ENCODE measurements at regions of chr1 and their contacts with region 1.

Region 1: GRCh38 chr1:211944733-211945500 is 90.4 kb downstream of the INTS7 start:
- DNase-seq: no peak
- ATAC-seq: peak; percentile 44; the same call in 2 of the 3 replicates
- H3K4me3 ChIP-seq: no peak overlapping the region
- H3K27ac ChIP-seq: no peak overlapping the region
- H3K4me1 ChIP-seq: no peaks in the 10 kb centered on the region
- H3K27me3 ChIP-seq: no peaks in the 10 kb centered on the region
- CTCF ChIP-seq: peak; percentile 35 to 53 (median 41); a peak in 4 of 6 replicates
- EP300 ChIP-seq: no peak
- POLR2A ChIP-seq: no peak
- RAD21 ChIP-seq: peak in 1 of 2 experiments; percentile 59; a peak in 3 of 4 replicates

Region 2: DNA sequence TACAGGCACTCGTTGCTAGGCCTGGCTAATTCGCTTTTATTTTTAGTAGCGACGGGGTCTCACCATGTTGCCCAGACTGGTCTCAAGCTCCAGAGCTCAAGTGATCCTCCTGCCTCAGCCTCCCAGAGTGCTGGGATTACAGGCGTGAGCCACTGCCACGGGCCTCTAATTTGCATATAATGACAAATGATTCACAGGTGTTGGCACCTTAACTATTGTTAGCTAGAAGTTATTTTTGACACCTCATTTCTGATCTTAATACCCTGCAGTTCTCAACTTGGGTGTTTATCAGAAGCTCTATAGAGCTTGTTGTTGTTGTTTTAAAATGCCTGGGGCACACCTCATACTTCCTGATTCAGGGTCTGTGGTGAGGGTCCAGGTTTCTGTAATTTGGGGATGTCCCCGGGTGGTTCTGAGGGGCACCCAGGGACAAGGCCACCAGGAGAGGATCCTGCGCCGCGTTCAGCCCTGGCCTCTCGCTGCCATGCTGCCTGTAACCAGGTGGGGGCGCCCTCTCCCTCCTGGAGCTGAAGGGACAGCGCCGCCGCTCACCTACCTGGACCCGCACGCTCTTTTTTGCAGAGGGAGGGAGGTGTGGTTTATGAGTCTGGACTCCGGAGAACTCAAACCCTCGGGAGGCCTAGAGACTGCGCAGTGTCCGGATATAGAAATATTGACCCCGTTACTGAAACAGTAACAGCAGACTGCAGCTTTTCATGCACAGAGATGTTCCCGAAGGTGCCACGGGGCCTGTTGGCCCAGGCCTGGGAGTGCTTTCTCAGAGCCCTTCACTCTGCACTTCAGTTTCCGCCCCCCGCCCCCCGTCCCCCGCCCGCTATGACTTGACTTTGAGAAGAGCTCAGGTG is 246.5 kb before region 1 on chr1:
- CTCF ChIA-PET with region 1: interaction called, 17 read pairs
- POLR2A ChIA-PET with region 1: no interaction called
- in situ Hi-C with region 1: no loop called
- intact Hi-C with region 1: no loop called
- DNase-seq: peak; percentile 90 to 94 (median 92)
- ATAC-seq: peak; percentile 97
- H3K4me3 ChIP-seq: no peak overlapping the region
- H3K27ac ChIP-seq: no peak overlapping the region
- H3K4me1 ChIP-seq: peaks cover 12 to 13% of the 10 kb centered on the region in 2 experiments; a peak in 4 of 5 replicates
- H3K27me3 ChIP-seq: peaks cover 0 to 7% of the 10 kb centered on the region in 2 experiments; a peak in 1 of 5 replicates
- CTCF ChIP-seq: peak; percentile 99 to 100 (median 100)
- EP300 ChIP-seq: peak; percentile 31; the same call in 1 of the 2 replicates
- POLR2A ChIP-seq: no peak
- RAD21 ChIP-seq: peak; percentile 99

Region 3: DNA sequence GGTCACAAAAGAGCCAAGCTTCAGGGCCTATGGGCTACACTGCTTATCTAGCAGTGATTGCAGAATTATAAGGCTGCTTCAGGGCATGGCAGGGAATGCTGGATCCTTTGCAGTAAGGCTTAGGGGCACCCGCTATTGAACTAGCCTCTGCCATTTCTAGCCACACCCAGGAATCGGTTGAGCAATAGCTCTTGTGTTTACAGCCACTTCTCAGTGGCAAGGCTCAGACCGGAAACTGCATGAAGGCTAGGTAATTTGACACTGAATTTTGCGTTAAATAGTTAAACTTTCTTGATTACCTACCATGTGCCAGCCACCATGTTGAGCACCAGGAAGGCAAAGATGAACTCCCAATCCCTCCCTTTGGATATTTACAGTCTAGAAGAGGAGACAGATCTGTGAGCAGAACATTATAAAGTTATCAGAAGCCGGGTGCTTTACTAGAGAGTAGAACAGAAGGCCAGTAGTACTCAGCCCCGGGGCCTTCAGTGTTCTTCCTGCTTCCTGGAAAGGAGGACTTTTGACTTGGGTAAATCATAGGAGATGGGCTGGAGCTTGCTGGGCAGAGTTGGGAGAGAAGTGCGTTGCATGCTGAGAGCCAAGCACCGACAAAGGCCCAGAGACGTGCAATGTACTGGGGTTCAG is 15.8 kb before region 1 on chr1:
- CTCF ChIA-PET with region 1: no interaction called
- POLR2A ChIA-PET with region 1: interaction called, 10 read pairs
- in situ Hi-C with region 1: no loop called
- intact Hi-C with region 1: no loop called
- DNase-seq: peak; percentile 49 to 74 (median 58)
- ATAC-seq: peak; percentile 74
- H3K4me3 ChIP-seq: no peak overlapping the region
- H3K27ac ChIP-seq: peak overlapping the region; percentile 68
- H3K4me1 ChIP-seq: peaks cover 7 to 45% of the 10 kb centered on the region in 2 experiments; a peak in 4 of 5 replicates
- H3K27me3 ChIP-seq: no peaks in the 10 kb centered on the region
- CTCF ChIP-seq: no peak
- EP300 ChIP-seq: no peak
- POLR2A ChIP-seq: no peak
- RAD21 ChIP-seq: no peak

Measured in K562 (cell line).